ENCODE measurements at regions of chr16 and their contacts with region 1.

Region 1: DNA sequence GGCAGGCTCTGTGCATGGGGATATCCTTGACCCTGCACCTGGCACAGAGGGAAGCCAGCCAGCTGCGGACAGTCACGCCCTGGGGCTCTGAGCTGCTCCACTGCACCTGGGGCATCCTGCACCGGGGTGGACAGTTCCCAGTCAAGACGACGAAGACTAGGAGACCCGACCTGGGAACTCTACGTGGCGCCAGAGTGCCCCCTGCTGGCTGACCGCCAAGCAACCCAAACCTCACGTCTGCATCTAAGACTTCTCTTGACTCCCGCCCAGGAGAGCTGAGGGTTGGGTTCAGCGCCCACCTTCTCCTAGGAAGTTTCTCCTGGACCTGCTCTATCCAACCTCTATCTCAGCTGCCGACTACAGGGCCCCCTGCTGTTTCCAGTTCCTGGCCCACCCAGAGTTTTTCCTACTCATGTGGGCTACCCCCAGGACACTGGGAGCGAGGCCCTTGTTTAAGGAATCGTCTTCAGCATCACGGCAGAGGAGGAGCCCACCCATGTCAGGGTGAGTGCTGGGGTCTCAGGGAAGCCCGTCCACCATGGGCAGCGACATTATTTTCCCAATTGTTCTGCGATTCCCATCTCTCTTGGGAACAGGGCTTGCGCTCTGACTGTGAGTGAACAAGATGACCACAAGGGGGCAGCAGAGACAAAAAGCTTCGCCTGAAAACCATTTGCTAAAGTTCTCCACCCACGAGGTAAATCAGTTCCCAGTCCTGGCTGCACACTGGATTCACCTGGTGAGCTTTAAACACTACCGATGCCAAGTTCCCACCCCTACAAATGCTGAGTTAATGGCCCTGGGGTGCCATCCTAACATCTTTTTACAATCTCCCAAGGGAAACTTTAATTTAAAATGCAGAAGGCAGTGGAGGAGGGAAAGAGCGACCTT is 29.3 kb downstream of the TLE7 start:
- DNase-seq: peak; percentile 39
- H3K4me3 Mint-ChIP-seq: no peak overlapping the region
- H3K27ac Mint-ChIP-seq: no peak overlapping the region
- H3K4me1 Mint-ChIP-seq: peaks cover 5% of the 10 kb centered on the region
- H3K27me3 Mint-ChIP-seq: peaks cover 9% of the 10 kb centered on the region

Region 2: DNA sequence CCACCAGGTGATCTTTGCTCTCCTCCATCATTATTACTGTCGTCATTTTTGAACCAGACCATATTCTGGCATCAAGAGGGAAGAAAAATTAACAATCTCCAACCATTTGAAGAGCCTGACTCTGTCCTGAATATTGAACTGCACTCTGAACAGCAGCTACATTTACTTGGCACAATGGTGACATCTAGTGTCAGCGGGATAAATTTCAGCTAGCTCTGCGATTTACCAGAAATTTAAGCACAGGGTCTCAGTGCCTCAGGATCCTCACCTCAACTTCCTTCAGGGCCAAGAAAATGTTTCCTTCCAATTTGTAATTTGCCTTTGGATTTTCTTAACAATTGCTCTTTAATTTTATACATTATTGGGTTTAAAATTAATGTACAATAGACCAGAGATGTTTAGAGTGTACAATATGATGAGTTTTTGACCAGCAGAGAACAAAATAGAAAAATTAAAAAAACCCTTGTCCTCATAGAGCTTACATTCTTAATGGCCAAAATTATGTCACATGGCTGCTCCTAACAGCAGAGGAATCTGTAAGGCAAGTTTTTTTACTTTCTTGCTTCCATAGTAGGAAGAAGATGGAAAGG is 87.4 kb after region 1 on chr16:
- intact Hi-C with region 1: loop called (anchors 1 kb)
- DNase-seq: no peak
- H3K4me3 Mint-ChIP-seq: no peak overlapping the region
- H3K27ac Mint-ChIP-seq: no peak overlapping the region
- H3K4me1 Mint-ChIP-seq: no peaks in the 10 kb centered on the region
- H3K27me3 Mint-ChIP-seq: peaks cover 2% of the 10 kb centered on the region

Region 3: DNA sequence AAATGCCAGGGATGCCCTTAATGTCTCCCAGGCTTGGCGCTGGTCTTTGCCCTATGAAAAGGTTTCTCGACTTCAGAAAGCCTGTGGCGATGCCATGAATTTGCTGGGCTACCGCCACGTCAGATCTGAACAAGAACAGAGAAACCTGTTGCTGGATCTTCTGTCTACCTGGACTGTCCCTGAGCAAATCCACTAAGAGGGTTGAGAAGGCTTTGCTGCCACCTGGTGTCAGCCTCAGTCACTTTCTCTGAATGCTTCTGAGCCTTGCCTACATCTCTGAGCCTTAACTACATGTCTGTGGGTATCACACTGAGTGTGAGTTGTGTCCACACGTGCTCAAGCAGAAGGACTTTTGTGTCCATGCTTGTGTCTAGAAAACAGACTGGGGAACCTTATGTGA is 125.1 kb after region 1 on chr16:
- intact Hi-C with region 1: loop called (anchors 1 kb)
- DNase-seq: peak; percentile 5
- H3K4me3 Mint-ChIP-seq: no peak overlapping the region
- H3K27ac Mint-ChIP-seq: no peak overlapping the region
- H3K4me1 Mint-ChIP-seq: peaks cover 4% of the 10 kb centered on the region
- H3K27me3 Mint-ChIP-seq: peaks cover 6% of the 10 kb centered on the region

Region 4: GRCh38 chr16:71610936-71611871 is 198.7 kb after region 1 on chr16:
- intact Hi-C with region 1: loop called (anchors 1 kb)
- DNase-seq: peak; percentile 59
- H3K4me3 Mint-ChIP-seq: no peak overlapping the region
- H3K27ac Mint-ChIP-seq: no peak overlapping the region
- H3K4me1 Mint-ChIP-seq: no peaks in the 10 kb centered on the region
- H3K27me3 Mint-ChIP-seq: peaks cover 29% of the 10 kb centered on the region